Activated T-helper 2 cell treated with anti-CD3 and anti-CD28 coated beads, Interferon-gamma antibody, Interleukin-2, Interleukin-4, amounts not matched to agents 10 μg/mL and 5 μg/mL and 100 μg/mL, durations not matched to agents 14 hours and 24 hours and 36 hours (primary cell): ENCODE measurements at regions of chr5 and their contacts with region 1.

Region 1: DNA sequence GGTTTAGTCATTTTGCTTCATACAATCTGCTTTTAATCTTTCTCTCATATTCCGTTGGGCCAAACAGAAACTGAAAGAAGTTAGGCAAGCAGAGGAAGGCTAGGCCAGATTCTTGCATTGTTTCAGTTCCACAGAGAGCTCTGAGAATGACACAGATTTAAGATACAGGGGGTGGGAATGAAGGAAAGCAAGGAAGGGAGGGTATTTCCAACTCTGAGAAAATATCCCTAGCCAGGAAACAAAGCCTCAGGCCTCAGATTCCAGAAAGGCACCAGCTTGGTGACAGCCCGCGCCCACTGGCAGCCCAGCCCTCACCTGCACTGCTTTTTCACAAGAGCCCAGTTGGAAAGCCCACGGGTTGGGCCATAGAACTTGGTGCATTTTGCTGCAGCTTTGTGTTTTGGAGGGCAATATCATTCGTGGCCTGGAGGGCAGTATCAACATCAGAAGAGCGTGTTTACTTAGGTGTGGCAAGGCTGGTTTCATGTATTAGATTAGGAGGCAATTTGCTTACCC is 63.5 kb downstream of the ENC1 start:
- DNase-seq: peak; percentile 17
- H3K4me3 Mint-ChIP-seq: peak overlapping the region; percentile 56
- H3K27ac Mint-ChIP-seq: peak overlapping the region; percentile 24
- H3K4me1 Mint-ChIP-seq: peaks cover 41% of the 10 kb centered on the region
- H3K27me3 Mint-ChIP-seq: peaks cover 23% of the 10 kb centered on the region

Region 2: GRCh38 chr5:73902327-73903051 is 674.5 kb before region 1 on chr5:
- intact Hi-C with region 1: loop called (anchors 2 kb)
- DNase-seq: no peak
- H3K4me3 Mint-ChIP-seq: no peak overlapping the region
- H3K27ac Mint-ChIP-seq: no peak overlapping the region
- H3K4me1 Mint-ChIP-seq: peaks cover 17% of the 10 kb centered on the region
- H3K27me3 Mint-ChIP-seq: peaks cover 45% of the 10 kb centered on the region

Region 3: GRCh38 chr5:74201334-74202081 is 375.5 kb before region 1 on chr5:
- intact Hi-C with region 1: loop called (anchors 1 kb)
- DNase-seq: no peak
- H3K4me3 Mint-ChIP-seq: no peak overlapping the region
- H3K27ac Mint-ChIP-seq: no peak overlapping the region
- H3K4me1 Mint-ChIP-seq: peaks cover 33% of the 10 kb centered on the region
- H3K27me3 Mint-ChIP-seq: peaks cover 14% of the 10 kb centered on the region

Region 4: DNA sequence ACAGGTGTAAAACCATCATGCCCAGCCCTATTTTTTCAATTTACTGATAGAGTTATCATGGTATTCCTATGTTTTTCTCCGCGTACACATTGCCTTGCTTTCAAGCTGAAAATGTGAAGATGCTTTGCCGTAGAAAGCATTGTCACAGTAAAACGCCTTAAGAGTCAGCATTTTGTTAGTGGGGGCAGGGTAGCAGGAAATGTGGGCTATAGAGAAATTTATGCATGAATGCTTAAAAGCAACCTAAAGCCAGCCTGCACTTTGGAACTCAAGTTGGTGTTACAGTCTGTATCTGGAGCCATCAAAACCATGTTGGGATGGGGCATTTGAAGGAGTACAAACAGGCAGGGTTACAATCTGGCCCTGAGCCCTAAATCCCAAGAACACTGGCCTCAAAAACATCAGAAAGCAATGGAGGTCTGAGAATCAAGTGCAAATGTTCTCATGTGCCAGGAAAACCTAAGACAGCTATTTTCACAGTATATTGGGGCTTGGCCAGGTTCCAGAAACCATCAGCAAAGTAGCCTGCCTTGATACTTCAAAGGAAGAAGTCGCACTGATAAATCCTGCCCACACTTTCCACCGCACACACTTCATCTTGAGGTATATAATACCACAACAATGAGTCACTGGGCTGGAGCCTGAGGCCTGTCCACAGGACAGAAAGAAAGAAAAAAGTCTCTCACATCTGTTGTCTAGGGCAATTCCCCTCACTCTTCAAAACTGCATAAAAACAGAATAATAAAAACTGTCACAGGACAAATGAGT is 250.2 kb before region 1 on chr5:
- intact Hi-C with region 1: loop called (anchors 2 kb)
- DNase-seq: peak; percentile 30
- H3K4me3 Mint-ChIP-seq: no peak overlapping the region
- H3K27ac Mint-ChIP-seq: no peak overlapping the region
- H3K4me1 Mint-ChIP-seq: peaks cover 21% of the 10 kb centered on the region
- H3K27me3 Mint-ChIP-seq: peaks cover 35% of the 10 kb centered on the region

Region 5: DNA sequence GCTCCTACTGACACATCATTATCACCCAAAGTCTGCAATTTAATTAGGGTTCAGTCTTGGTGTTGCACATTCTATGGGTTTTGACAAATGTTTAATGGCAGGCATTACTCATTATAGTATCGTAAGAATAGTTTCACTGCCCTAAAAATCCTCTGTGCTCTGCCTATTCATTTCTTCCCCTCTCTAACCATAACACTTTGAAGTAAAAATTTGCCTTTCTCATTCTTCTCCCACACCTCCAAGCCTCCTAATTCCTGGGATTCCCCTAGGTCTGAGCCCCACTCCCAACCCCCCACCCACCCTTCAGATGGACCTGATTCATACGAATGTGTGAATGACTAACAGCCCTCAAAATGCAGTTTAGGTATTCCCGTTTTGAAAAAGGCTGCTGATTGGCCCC is 45.1 kb after region 1 on chr5:
- intact Hi-C with region 1: loop called (anchors 1 kb)
- DNase-seq: no peak
- H3K4me3 Mint-ChIP-seq: no peak overlapping the region
- H3K27ac Mint-ChIP-seq: no peak overlapping the region
- H3K4me1 Mint-ChIP-seq: peaks cover 14% of the 10 kb centered on the region
- H3K27me3 Mint-ChIP-seq: peaks cover 52% of the 10 kb centered on the region

Region 6: GRCh38 chr5:74766849-74767578 is 190.0 kb after region 1 on chr5 and contains the starts of genes GFM2 and NSA2:
- intact Hi-C with region 1: loop called (anchors 10 kb)
- DNase-seq: peak; percentile 91
- H3K4me3 Mint-ChIP-seq: peak within 1 kb of the TSS; percentile 100
- H3K27ac Mint-ChIP-seq: peak within 1 kb of the TSS; percentile 98
- H3K4me1 Mint-ChIP-seq: peaks cover 29% of the 10 kb centered on the region
- H3K27me3 Mint-ChIP-seq: no peaks in the 10 kb centered on the region
- total RNA-seq, gene GFM2: 32.9 and 34.6 TPM in 2 replicates
- total RNA-seq, gene NSA2: 83.9 and 91.4 TPM in 2 replicates

Region 7: DNA sequence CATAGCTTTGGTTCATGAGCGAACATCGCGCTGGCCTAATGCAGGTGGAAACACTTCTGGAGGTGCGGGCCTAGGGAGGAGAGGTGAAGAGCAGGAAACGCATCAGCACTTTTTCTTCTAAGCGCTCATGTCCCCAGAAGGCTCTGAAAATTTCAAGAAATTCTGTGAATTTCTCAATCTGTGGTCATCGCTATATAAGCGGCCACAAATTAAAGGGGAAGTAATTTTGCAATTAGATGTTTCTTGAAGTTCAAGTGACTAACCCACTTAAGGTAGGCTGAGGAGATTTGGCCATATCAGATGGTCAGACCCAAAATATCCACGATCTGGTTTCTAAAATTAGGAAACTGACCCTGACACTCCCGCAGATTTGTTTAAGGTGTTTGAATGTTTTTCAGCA is 743.3 kb after region 1 on chr5:
- intact Hi-C with region 1: loop called (anchors 10 kb)
- DNase-seq: no peak
- H3K4me3 Mint-ChIP-seq: no peak overlapping the region
- H3K27ac Mint-ChIP-seq: peak overlapping the region; percentile 77
- H3K4me1 Mint-ChIP-seq: peaks cover 24% of the 10 kb centered on the region
- H3K27me3 Mint-ChIP-seq: no peaks in the 10 kb centered on the region